ENCODE measurements at regions of chr3 and their contacts with region 1.

Region 1: GRCh38 chr3:98022978-98023820 is 11.9 kb downstream of the GABRR3 start:
- DNase-seq: peak; percentile 21
- H3K4me3 ChIP-seq: no peak overlapping the region
- CTCF ChIP-seq: peak; percentile 84

Region 2: DNA sequence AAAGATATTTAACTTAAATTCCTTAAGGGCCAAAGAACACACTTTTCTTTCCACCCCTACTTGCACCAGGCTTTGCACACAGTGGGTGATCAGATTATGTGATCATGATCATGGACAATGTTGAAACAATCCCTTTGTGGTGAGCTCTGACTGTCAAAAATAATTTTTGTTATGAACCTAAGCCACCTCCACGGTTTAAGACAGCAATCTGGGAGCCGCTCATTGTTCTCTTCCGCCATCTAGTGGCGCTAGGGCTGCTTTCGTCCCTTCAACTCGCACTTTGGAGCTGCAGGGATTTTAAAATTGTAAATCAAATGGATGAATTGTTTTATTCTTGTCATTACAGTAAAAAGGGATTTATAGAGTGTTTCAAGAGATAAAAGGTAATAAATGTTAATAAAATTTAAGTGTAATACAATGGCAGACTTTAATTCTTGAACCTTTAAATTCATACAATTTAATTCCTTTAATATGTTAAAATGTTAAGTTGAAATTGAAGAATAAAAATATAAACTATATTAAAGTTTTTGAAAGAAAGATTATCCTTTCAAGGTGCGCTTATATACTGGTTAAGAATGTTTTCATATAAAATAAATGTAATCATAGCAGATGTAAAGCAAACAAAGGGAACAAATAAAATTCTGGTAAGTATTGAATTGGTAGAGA is 303.9 kb before region 1 on chr3:
- CTCF ChIA-PET with region 1: interaction called, 16 read pairs
- POLR2A ChIA-PET with region 1: no interaction called
- DNase-seq: peak; percentile 2
- H3K4me3 ChIP-seq: no peak overlapping the region
- CTCF ChIP-seq: peak; percentile 85

Region 3: DNA sequence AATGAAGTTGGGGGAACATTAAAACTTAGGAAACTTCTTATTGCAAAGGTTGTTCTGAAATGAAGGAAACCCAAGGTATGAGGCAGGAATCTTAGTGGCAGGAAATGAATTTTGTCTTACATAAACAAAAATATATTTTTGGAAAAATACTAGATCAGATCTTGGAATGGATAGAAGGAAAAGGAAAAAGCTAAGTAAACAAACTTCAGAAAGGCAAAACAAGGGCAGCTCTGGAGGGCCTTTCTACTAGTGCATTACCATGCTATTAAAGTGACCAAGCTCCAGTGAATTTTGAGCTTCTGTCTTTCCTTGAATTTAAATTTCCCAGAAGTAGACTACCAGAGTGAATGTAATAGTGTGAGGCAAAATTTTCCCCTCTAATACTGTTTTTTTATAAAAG is 245.0 kb before region 1 on chr3:
- CTCF ChIA-PET with region 1: interaction called, 10 read pairs
- POLR2A ChIA-PET with region 1: no interaction called
- DNase-seq: no peak
- H3K4me3 ChIP-seq: no peak overlapping the region
- CTCF ChIP-seq: no peak

Region 4: GRCh38 chr3:97793420-97794019 is 229.7 kb before region 1 on chr3:
- CTCF ChIA-PET with region 1: interaction called, 177 read pairs
- POLR2A ChIA-PET with region 1: no interaction called
- DNase-seq: peak; percentile 9
- H3K4me3 ChIP-seq: no peak overlapping the region
- CTCF ChIP-seq: peak; percentile 62

Region 5: DNA sequence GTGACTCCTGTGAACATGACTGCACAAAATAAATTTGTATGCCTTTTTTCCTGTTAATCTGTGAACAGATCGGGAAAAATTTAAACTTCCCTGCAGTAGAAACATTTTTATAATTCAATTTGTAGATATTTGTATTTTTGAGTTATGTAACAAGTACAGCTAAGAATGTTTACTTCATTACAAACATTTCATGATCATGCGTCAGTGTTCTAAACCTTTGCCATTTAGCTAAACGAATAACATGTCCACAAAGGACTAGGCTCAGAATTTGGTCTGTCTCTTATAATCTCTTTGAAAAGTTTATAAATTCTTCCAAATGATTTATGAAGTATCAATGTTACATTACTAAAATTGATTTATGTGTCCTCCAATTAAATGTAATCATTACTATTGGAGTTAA is 218.7 kb before region 1 on chr3:
- CTCF ChIA-PET with region 1: interaction called, 177 read pairs
- POLR2A ChIA-PET with region 1: no interaction called
- DNase-seq: no peak
- H3K4me3 ChIP-seq: no peak overlapping the region
- CTCF ChIP-seq: no peak

Region 6: DNA sequence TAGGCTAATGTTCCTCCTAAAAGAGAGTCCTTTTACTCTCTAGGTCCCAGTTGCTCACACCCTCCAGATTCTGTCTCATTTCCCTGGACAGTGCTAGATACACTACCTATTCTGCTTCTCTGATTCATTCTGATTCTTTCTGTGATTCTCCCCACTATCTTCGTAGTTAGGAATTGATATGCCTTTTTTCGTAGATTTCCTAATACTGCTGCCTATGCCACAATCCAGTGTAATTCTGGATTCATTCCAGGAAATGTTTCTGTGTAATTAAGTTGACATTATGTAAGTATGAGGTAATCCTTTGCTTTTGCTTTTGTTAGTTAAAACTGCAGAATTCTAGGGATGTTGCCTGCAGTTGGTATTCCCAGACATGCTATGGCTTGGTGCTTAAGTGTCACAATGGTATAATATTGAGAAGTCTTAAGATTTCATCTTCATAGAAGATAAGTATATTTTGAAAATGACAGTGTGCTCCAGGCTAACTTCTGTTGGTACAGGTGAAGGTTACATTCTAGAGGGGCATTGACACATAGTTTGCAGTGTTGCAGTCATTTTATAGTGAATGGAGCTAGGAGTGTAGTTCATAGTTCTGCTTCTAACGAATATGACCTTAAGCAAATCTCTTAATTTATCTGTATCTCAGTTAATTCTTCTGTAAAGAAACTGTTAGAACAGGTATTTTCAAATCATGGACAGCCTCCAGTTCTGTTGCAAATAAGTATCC is 105.2 kb before region 1 on chr3:
- CTCF ChIA-PET with region 1: no interaction called
- POLR2A ChIA-PET with region 1: no interaction called
- DNase-seq: no peak
- H3K4me3 ChIP-seq: no peak overlapping the region
- CTCF ChIP-seq: no peak

Region 7: GRCh38 chr3:98039322-98040024 is 16.3 kb after region 1 on chr3:
- CTCF ChIA-PET with region 1: interaction called, 77 read pairs
- POLR2A ChIA-PET with region 1: no interaction called
- DNase-seq: peak; percentile 56
- H3K4me3 ChIP-seq: peak overlapping the region; percentile 59
- CTCF ChIP-seq: peak; percentile 81

Measured in AG04449 (cell line).